ENCODE measurements at regions of chr16 and their contacts with region 1.

Region 1: DNA sequence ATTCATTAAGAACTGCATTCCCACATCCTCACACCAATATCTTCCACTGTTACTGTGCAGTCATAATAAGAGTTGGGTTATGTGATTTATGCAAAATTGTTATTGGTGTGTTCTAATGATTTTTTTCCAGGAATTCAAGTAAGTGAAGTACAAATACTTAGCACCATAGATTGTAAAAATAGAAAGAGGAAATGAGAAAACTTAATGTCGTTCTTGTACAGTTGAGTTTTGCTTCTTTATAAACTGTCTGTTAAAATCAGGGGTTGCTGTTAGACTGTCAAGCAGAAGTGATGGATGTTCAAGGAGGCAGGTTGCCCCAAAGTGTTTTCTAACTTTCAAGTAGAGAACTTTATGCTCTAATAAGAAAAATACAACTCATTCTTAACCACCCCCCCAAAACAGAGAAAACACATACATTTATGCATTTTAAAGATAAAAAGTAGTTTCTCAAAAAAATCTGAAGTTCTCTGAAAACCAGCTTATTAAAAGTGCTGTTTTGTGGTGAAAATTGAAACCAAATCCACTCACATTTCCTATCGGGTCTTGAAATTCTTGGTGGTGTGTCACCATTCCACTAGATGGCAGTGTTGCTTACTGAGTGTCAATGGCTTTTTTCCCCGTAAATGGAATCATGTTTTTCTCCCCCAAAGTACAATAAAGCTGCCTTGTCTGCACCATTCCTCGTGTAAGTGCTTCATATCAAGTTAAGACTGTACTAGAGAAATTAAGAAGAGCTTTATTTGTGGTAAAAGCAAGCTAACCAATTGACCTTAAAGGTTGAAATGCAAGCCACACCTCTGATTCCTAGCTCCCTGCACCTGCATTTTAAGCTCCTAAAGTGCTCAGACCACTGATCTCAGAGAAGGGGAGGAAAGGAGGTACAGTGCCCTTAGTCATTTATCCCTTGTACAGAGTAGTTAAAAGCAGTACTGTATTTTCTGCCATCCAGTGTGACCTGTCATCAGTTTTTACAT is 4.7 kb upstream of the IGSF6 start:
- DNase-seq: peak; percentile 62
- H3K4me3 Mint-ChIP-seq: no peak overlapping the region
- H3K27ac Mint-ChIP-seq: no peak overlapping the region
- H3K4me1 Mint-ChIP-seq: peaks cover 5% of the 10 kb centered on the region
- H3K27me3 Mint-ChIP-seq: no peaks in the 10 kb centered on the region
- CTCF ChIP-seq: peak; percentile 74

Region 2: DNA sequence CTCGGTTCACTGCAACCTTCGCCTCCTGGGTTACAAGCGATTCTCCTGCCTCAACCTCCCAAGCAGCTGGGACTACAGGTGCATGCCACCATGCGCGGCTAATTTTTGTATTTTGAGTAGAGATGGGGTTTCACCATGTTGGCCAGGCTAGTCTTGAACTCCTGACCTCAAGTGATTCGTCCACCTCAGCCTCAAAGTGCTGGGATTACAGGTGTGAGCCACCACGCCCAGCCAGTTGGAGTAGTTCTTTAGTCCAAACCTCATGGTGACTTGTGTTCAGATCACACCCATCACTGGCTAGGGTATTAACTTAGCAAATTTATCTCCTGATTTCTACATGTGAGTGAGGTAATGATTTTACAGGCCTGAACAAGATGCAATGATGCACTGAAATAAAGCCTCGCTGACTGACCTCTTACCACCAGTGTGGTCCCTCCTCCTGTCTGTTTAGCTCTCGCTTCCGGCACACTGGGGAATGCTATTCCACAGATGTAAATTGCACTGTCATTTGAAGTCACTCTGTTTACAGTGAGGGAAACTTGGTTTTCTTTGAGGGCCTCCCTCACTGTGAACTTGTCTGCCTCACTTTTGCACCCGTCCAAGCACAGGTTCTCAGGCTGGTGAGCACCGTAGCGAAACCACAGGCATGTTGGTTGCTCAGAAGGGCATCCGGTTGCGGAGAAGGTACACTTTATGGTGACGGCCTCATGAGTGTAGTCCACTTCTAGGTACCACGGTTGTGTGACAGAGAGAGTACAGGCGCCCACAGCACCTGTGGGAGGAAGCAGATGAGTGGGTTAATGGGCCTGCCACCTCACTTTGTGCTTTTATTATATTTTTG is 10.1 kb before region 1 on chr16:
- CTCF ChIA-PET with region 1: interaction called, 104 read pairs
- POLR2A ChIA-PET with region 1: no interaction called
- intact Hi-C with region 1: no loop called
- DNase-seq: no peak
- H3K4me3 Mint-ChIP-seq: no peak overlapping the region
- H3K27ac Mint-ChIP-seq: no peak overlapping the region
- H3K4me1 Mint-ChIP-seq: no peaks in the 10 kb centered on the region
- H3K27me3 Mint-ChIP-seq: no peaks in the 10 kb centered on the region
- CTCF ChIP-seq: no peak

Region 3: GRCh38 chr16:21673469-21673868 is 16.4 kb after region 1 on chr16:
- CTCF ChIA-PET with region 1: interaction called, 27 read pairs
- POLR2A ChIA-PET with region 1: no interaction called
- intact Hi-C with region 1: no loop called
- DNase-seq: no peak
- H3K4me3 Mint-ChIP-seq: no peak overlapping the region
- H3K27ac Mint-ChIP-seq: no peak overlapping the region
- H3K4me1 Mint-ChIP-seq: no peaks in the 10 kb centered on the region
- H3K27me3 Mint-ChIP-seq: peaks cover 36% of the 10 kb centered on the region
- CTCF ChIP-seq: no peak

Region 4: GRCh38 chr16:21684199-21684598 is 27.1 kb after region 1 on chr16:
- CTCF ChIA-PET with region 1: interaction called, 11 read pairs
- POLR2A ChIA-PET with region 1: no interaction called
- intact Hi-C with region 1: no loop called
- DNase-seq: peak; percentile 27
- H3K4me3 Mint-ChIP-seq: no peak overlapping the region
- H3K27ac Mint-ChIP-seq: no peak overlapping the region
- H3K4me1 Mint-ChIP-seq: no peaks in the 10 kb centered on the region
- H3K27me3 Mint-ChIP-seq: peaks cover 22% of the 10 kb centered on the region
- CTCF ChIP-seq: peak; percentile 48

Region 5: GRCh38 chr16:21698169-21699032 is 41.3 kb after region 1 on chr16:
- CTCF ChIA-PET with region 1: interaction called, 174 read pairs
- POLR2A ChIA-PET with region 1: interaction called, 4 read pairs
- intact Hi-C with region 1: no loop called
- DNase-seq: no peak
- H3K4me3 Mint-ChIP-seq: no peak overlapping the region
- H3K27ac Mint-ChIP-seq: no peak overlapping the region
- H3K4me1 Mint-ChIP-seq: peaks cover 4% of the 10 kb centered on the region
- H3K27me3 Mint-ChIP-seq: peaks cover 11% of the 10 kb centered on the region
- CTCF ChIP-seq: no peak

Region 6: DNA sequence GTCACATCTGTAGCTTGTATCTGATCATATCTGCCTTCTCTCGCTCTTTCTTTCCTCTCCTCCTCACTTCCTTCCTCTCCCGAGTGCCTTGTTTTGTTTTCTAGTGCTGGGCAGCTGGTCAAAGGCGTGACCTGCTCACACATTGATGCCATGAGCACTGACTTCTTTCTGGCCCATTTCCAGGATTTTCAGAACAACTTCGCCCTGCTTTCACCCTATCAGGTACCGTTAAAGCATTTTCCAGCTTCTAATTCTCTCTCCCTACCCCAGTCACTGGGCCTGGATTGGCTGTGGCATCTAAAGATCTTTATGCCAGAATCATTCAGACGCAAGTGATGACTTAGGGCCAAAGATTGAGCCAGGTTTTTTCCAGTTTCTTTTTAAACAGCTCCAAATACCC is 62.2 kb after region 1 on chr16:
- CTCF ChIA-PET with region 1: interaction called, 12 read pairs
- POLR2A ChIA-PET with region 1: no interaction called
- intact Hi-C with region 1: no loop called
- DNase-seq: no peak
- H3K4me3 Mint-ChIP-seq: no peak overlapping the region
- H3K27ac Mint-ChIP-seq: no peak overlapping the region
- H3K4me1 Mint-ChIP-seq: peaks cover 4% of the 10 kb centered on the region
- H3K27me3 Mint-ChIP-seq: no peaks in the 10 kb centered on the region
- CTCF ChIP-seq: no peak

Measured in MCF 10A (cell line).